Psoas muscle (tissue), 8 donors: ENCODE measurements at regions of chr3 and their contacts with region 1.

Region 1: GRCh38 chr3:179369621-179370020 is 22.1 kb downstream of the MFN1 start:
- DNase-seq: no peak
- ATAC-seq: no peak
- H3K4me3 ChIP-seq: no peak overlapping the region
- H3K27ac ChIP-seq: no peak overlapping the region
- H3K4me1 ChIP-seq: no peaks in the 10 kb centered on the region
- H3K27me3 ChIP-seq: no peaks in the 10 kb centered on the region
- CTCF ChIP-seq: no peak

Region 2: GRCh38 chr3:179589143-179589542 is 219.5 kb after region 1 on chr3:
- intact Hi-C with region 1: loop called (anchors 10 kb)
- DNase-seq: no peak
- ATAC-seq: no peak
- H3K4me3 ChIP-seq: no peak overlapping the region
- H3K27ac ChIP-seq: no peak overlapping the region
- H3K4me1 ChIP-seq: no peaks in the 10 kb centered on the region
- H3K27me3 ChIP-seq: no peaks in the 10 kb centered on the region
- CTCF ChIP-seq: no peak